ENCODE measurements at regions of chr19 and their contacts with region 1.

Region 1: GRCh38 chr19:48637170-48637947 is at the start of gene DBP:
- DNase-seq: peak; percentile 100
- ATAC-seq: peak; percentile 68
- H3K4me3 ChIP-seq: peak within 1 kb of the TSS; percentile 74 to 98 (median 88)
- H3K4me3 Mint-ChIP-seq: peak within 1 kb of the TSS; percentile 96
- H3K27ac ChIP-seq: peak within 1 kb of the TSS; percentile 89 to 94
- H3K27ac Mint-ChIP-seq: peak within 1 kb of the TSS; percentile 100
- H3K4me1 ChIP-seq: peaks cover 40 to 41% of the 10 kb centered on the region in 2 donors
- H3K4me1 Mint-ChIP-seq: peaks cover 55% of the 10 kb centered on the region
- H3K27me3 ChIP-seq: no peaks in the 10 kb centered on the region
- H3K27me3 Mint-ChIP-seq: no peaks in the 10 kb centered on the region
- CTCF ChIP-seq: no peak
- total RNA-seq, gene DBP: 33.0 and 33.2 TPM in 2 replicates

Region 2: DNA sequence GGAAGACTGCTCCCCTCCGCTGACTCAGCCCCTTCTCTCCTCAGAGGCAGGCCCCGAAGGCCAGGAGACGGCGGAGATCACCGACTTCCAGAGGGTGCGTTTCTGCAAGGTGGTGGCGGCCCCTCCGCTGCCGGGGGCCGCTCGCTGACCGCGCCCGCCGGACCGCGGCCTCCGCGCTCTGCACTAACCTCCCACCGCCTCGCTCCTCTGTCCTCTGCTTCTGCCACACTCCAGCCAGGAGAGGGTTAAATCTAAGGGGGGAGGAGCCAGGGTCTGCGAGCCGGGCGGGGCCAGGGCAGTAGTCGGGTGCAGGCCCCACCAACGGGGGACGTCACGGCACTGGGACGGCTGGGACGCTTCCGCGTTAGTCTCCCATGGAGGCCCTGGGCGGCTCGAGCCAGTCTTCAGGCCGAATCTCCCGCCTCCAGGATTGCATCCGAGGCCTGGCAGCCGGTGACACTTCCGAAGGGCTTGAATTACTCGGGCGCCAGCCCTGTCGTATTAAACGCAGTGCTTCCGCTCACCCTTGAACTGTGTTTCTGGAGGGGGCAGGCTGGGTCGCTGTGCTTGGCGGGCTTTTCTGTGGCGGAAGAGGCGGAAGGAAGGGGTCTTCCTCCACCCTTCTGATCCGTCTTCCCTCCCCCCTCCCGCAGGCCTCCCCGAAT is 1363.9 kb before region 1 on chr19:
- CTCF ChIA-PET with region 1: no interaction called
- POLR2A ChIA-PET with region 1: no interaction called
- intact Hi-C with region 1: loop called (anchors 5 kb)
- DNase-seq: peak; percentile 91
- ATAC-seq: peak; percentile 56
- H3K4me3 ChIP-seq: peak overlapping the region; percentile 54 to 99 (median 96)
- H3K4me3 Mint-ChIP-seq: peak overlapping the region; percentile 97
- H3K27ac ChIP-seq: peak overlapping the region; percentile 94 to 98
- H3K27ac Mint-ChIP-seq: peak overlapping the region; percentile 99
- H3K4me1 ChIP-seq: peaks cover 12 to 22% of the 10 kb centered on the region in 2 donors
- H3K4me1 Mint-ChIP-seq: peaks cover 22% of the 10 kb centered on the region
- H3K27me3 ChIP-seq: no peaks in the 10 kb centered on the region
- H3K27me3 Mint-ChIP-seq: no peaks in the 10 kb centered on the region
- CTCF ChIP-seq: no peak

Region 3: GRCh38 chr19:48468775-48469288 is 168.5 kb before region 1 on chr19:
- CTCF ChIA-PET with region 1: no interaction called
- POLR2A ChIA-PET with region 1: no interaction called
- intact Hi-C with region 1: loop called (anchors 1 kb)
- DNase-seq: peak; percentile 100
- ATAC-seq: peak; percentile 87
- H3K4me3 ChIP-seq: peak overlapping the region; percentile 8 to 90 (median 83)
- H3K4me3 Mint-ChIP-seq: peak overlapping the region; percentile 92
- H3K27ac ChIP-seq: peak overlapping the region; percentile 52 to 84
- H3K27ac Mint-ChIP-seq: peak overlapping the region; percentile 89
- H3K4me1 ChIP-seq: peaks cover 11 to 15% of the 10 kb centered on the region in 2 donors
- H3K4me1 Mint-ChIP-seq: peaks cover 17% of the 10 kb centered on the region
- H3K27me3 ChIP-seq: peaks cover 0 to 3% (median 0%) of the 10 kb centered on the region in 4 experiments
- H3K27me3 Mint-ChIP-seq: no peaks in the 10 kb centered on the region
- CTCF ChIP-seq: no peak

Region 4: GRCh38 chr19:48624067-48624594 is 13.2 kb before region 1 on chr19:
- CTCF ChIA-PET with region 1: interaction called, 6 read pairs
- POLR2A ChIA-PET with region 1: interaction called, 23 read pairs
- intact Hi-C with region 1: loop called (anchors 1 kb)
- DNase-seq: peak; percentile 96
- ATAC-seq: peak; percentile 75
- H3K4me3 ChIP-seq: peak overlapping the region in 4 of 5 experiments; percentile 29 to 60 (median 50)
- H3K4me3 Mint-ChIP-seq: peak overlapping the region; percentile 78
- H3K27ac ChIP-seq: peak overlapping the region; percentile 30 to 63
- H3K27ac Mint-ChIP-seq: peak overlapping the region; percentile 84
- H3K4me1 ChIP-seq: peaks cover 19 to 30% of the 10 kb centered on the region in 2 donors
- H3K4me1 Mint-ChIP-seq: peaks cover 38% of the 10 kb centered on the region
- H3K27me3 ChIP-seq: no peaks in the 10 kb centered on the region
- H3K27me3 Mint-ChIP-seq: no peaks in the 10 kb centered on the region
- CTCF ChIP-seq: no peak

Region 5: DNA sequence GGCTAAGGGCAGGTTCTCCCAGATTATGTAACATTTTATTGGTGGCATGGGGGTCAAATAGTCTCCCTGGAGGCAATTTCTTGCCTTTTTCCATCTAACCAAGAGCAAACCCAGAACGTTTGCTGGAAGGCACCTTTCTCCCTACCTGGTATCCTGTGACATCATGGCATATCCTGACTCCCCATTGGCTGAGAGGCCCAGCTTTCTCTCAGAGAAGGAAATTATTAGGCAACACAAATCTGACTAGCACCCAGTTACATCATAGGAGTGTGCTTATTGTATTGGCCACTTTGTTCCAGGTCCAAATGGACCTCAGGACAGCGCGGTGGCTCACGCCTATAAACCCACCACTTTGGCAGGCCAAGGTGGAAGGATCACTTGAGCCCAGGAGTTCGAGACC is 22.4 kb after region 1 on chr19:
- CTCF ChIA-PET with region 1: no interaction called
- POLR2A ChIA-PET with region 1: no interaction called
- intact Hi-C with region 1: no loop called
- DNase-seq: peak; percentile 58
- ATAC-seq: no peak
- H3K4me3 ChIP-seq: no peak overlapping the region
- H3K4me3 Mint-ChIP-seq: peak overlapping the region; percentile 19
- H3K27ac ChIP-seq: no peak overlapping the region
- H3K27ac Mint-ChIP-seq: peak overlapping the region; percentile 46
- H3K4me1 ChIP-seq: peaks cover 8 to 19% of the 10 kb centered on the region in 2 donors
- H3K4me1 Mint-ChIP-seq: peaks cover 16% of the 10 kb centered on the region
- H3K27me3 ChIP-seq: no peaks in the 10 kb centered on the region
- H3K27me3 Mint-ChIP-seq: no peaks in the 10 kb centered on the region
- CTCF ChIP-seq: no peak

Region 6: DNA sequence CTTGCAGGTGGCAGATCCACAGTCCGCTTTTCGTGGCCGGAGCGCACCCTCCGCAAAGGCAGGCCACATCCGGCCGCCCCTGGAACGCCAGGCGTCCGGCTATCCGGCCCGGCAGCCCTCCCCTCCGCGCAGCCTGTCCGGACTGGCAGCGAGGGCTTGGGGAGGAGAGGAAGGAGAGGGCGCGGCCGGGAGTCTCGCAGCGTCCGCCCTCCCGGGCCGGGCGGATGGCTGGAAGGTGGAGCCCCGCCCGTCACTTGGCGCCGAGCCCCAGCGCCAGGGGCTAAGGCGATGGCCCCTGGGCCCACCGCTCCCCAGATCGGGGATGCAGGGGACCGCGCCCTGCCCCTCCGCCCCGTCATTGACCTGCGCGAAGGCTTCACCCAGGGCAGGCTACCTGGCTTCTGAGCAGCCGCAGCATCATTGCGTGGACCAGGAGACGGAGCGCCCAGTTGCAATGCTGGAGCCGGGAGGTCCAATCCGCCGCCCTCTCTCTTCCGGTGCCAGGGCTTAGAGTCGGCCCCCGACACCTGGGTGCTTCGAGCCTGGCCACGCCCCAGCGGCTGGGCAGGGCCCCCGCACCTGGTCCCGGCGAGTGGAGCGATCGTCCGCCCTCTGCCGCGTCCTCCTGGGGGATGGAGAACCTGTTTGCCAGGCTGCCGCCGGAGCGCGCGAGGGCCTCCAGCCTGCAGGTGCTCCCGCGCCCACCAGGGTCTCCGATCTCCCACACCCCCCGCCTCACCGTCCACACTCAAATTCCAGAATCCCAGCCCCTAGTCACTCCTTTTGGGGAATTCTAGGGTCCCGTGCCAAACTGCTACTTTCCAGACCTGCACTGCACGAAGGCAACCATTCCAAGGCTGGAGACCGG is 115.4 kb after region 1 on chr19 and contains the start of gene FUT1:
- CTCF ChIA-PET with region 1: no interaction called
- POLR2A ChIA-PET with region 1: no interaction called
- intact Hi-C with region 1: no loop called
- DNase-seq: peak; percentile 58
- ATAC-seq: peak; percentile 66
- H3K4me3 ChIP-seq: peak within 1 kb of the TSS in 4 of 5 experiments; percentile 13 to 52 (median 40)
- H3K4me3 Mint-ChIP-seq: peak within 1 kb of the TSS; percentile 78
- H3K27ac ChIP-seq: no peak within 1 kb of the TSS
- H3K27ac Mint-ChIP-seq: no peak within 1 kb of the TSS
- H3K4me1 ChIP-seq: peaks cover 15 to 16% of the 10 kb centered on the region in 2 donors
- H3K4me1 Mint-ChIP-seq: peaks cover 16% of the 10 kb centered on the region
- H3K27me3 ChIP-seq: peaks cover 0 to 67% (median 20%) of the 10 kb centered on the region in 4 experiments
- H3K27me3 Mint-ChIP-seq: peaks cover 33% of the 10 kb centered on the region
- CTCF ChIP-seq: no peak
- total RNA-seq, gene FUT1: not detected in 2 replicates

Region 7: GRCh38 chr19:48872182-48872883 is 235.0 kb after region 1 on chr19 and contains the start of gene PPP1R15A:
- CTCF ChIA-PET with region 1: no interaction called
- POLR2A ChIA-PET with region 1: no interaction called
- intact Hi-C with region 1: loop called (anchors 1 kb)
- DNase-seq: peak; percentile 99
- ATAC-seq: peak; percentile 53
- H3K4me3 ChIP-seq: peak within 1 kb of the TSS; percentile 70 to 100 (median 95)
- H3K4me3 Mint-ChIP-seq: peak within 1 kb of the TSS; percentile 98
- H3K27ac ChIP-seq: peak within 1 kb of the TSS; percentile 96 to 100
- H3K27ac Mint-ChIP-seq: peak within 1 kb of the TSS; percentile 100
- H3K4me1 ChIP-seq: peaks cover 30 to 48% of the 10 kb centered on the region in 2 donors
- H3K4me1 Mint-ChIP-seq: peaks cover 40% of the 10 kb centered on the region
- H3K27me3 ChIP-seq: peaks cover 0 to 2% (median 0%) of the 10 kb centered on the region in 4 experiments
- H3K27me3 Mint-ChIP-seq: peaks cover 5% of the 10 kb centered on the region
- CTCF ChIP-seq: no peak
- total RNA-seq, gene PPP1R15A: 122 and 128 TPM in 2 replicates

Region 8: GRCh38 chr19:48946463-48947257 is 309.3 kb after region 1 on chr19:
- CTCF ChIA-PET with region 1: no interaction called
- POLR2A ChIA-PET with region 1: no interaction called
- intact Hi-C with region 1: no loop called
- DNase-seq: no peak
- ATAC-seq: no peak
- H3K4me3 ChIP-seq: no peak overlapping the region
- H3K4me3 Mint-ChIP-seq: no peak overlapping the region
- H3K27ac ChIP-seq: no peak overlapping the region
- H3K27ac Mint-ChIP-seq: no peak overlapping the region
- H3K4me1 ChIP-seq: no peaks in the 10 kb centered on the region
- H3K4me1 Mint-ChIP-seq: no peaks in the 10 kb centered on the region
- H3K27me3 ChIP-seq: no peaks in the 10 kb centered on the region
- H3K27me3 Mint-ChIP-seq: no peaks in the 10 kb centered on the region
- CTCF ChIP-seq: no peak

Region 9: DNA sequence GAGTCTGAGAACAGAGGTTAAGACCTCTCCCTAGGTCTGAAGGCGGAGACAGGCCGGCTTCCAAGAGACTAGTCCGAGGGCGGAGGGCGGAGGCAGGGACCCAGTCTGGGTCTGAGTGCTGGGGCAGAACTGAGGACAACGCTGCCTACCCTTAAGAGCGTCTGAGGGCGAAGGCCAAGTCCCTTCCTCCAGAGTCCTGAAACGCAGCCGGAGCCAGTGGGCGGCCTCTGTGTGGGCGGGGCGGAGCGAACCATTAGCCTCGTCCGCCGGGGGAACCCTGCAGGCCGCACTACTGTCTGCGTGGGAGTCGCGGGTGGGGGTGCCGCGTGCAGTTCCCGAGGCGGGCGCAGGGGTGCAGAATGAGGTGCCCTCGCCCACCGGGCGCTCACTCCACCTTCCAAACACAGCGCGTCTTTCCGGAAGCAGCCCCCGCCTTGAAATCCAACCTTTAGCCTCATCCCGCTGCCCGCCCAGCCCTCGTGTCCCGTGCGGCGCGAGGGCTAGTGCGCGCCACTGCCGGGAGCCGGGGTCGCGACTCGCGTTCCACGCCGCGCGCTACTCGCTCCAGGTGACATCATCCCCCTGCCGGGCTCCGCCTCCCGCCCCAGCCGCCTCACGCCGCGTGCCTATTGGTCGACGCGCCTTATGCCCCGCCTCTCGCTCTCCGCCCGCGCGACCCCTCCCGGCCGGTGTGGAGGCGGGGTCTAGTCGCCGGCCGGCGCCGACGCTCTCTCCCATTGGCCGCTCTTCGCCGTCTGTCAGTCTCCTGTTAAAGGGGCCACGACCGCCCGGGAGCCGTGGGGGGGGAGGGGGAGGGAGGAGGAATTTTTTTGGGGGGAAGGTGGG is 481.4 kb after region 1 on chr19 and contains the start of gene C19orf73:
- CTCF ChIA-PET with region 1: no interaction called
- POLR2A ChIA-PET with region 1: interaction called, 5 read pairs
- intact Hi-C with region 1: loop called (anchors 10 kb)
- DNase-seq: peak; percentile 99
- ATAC-seq: peak; percentile 81
- H3K4me3 ChIP-seq: peak within 1 kb of the TSS; percentile 39 to 88 (median 62)
- H3K4me3 Mint-ChIP-seq: peak within 1 kb of the TSS; percentile 90
- H3K27ac ChIP-seq: peak within 1 kb of the TSS; percentile 93 to 95
- H3K27ac Mint-ChIP-seq: peak within 1 kb of the TSS; percentile 93
- H3K4me1 ChIP-seq: peaks cover 22 to 33% of the 10 kb centered on the region in 2 donors
- H3K4me1 Mint-ChIP-seq: peaks cover 41% of the 10 kb centered on the region
- H3K27me3 ChIP-seq: peaks cover 0 to 11% (median 2%) of the 10 kb centered on the region in 4 experiments
- H3K27me3 Mint-ChIP-seq: peaks cover 6% of the 10 kb centered on the region
- CTCF ChIP-seq: peak; percentile 53
- total RNA-seq, gene C19orf73: 3.9 and 5.3 TPM in 2 replicates

Region 10: DNA sequence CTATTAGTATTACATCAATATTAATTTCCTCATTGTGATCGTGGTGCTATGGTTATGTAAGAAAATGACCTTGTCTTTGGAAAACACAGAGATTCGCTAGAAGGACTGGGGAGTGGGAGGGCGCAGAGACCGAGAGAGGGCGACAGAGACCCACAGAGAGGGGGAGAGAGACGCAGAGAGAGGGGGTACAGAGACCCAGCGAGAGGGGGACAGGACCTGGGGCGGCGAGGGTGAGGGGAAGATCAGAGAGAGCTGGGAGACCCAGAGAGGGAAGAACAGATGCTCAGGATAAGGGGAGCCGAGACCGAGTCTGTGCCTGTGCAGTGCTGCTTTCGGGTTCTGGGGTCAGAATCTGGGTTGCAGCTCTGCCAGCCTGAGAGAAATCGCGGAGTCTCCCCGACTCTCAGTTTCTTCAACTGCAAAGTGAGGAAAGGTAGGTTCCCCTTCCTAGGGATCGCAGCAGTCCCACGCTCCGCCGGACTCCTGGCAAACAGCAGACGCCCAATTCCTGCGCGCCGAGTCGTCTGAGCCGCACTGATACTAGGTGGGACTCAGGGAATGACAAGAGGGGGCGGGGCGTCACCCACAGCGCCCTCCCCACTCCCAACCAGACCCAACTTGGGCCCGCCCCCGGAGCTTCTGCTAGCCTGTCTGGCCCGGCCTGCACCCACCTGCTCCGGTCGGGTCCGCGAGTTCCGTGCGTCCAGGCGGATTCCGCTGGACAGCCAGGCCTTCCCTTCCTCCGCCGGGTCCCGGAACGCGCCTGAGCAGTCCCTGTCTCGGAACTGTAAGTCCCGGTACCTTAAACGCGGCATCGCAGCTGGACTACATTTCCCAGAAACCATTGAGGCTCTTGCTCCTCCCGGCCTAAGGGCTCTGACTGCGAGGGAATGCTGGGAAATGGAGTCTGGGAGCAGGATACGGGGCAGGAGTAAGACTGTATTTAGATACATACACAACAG is 1510.4 kb after region 1 on chr19:
- CTCF ChIA-PET with region 1: no interaction called
- POLR2A ChIA-PET with region 1: interaction called, 11 read pairs
- intact Hi-C with region 1: no loop called
- DNase-seq: peak; percentile 84
- ATAC-seq: peak; percentile 90
- H3K4me3 ChIP-seq: peak overlapping the region; percentile 11 to 76 (median 57)
- H3K4me3 Mint-ChIP-seq: peak overlapping the region; percentile 78
- H3K27ac ChIP-seq: no peak overlapping the region
- H3K27ac Mint-ChIP-seq: no peak overlapping the region
- H3K4me1 ChIP-seq: peaks cover 11 to 13% of the 10 kb centered on the region in 2 donors
- H3K4me1 Mint-ChIP-seq: peaks cover 7% of the 10 kb centered on the region
- H3K27me3 ChIP-seq: peaks cover 0 to 34% (median 13%) of the 10 kb centered on the region in 4 experiments
- H3K27me3 Mint-ChIP-seq: peaks cover 39% of the 10 kb centered on the region
- CTCF ChIP-seq: peak; percentile 20